ENCODE measurements at regions of chr2 and their contacts with region 1.

Region 1: GRCh38 chr2:207341804-207342203 is 176.1 kb upstream of the KLF7 start:
- DNase-seq: no peak
- ATAC-seq: peak; percentile 89
- H3K4me3 Mint-ChIP-seq: no peak overlapping the region
- H3K27ac Mint-ChIP-seq: no peak overlapping the region
- H3K4me1 Mint-ChIP-seq: peaks cover 38% of the 10 kb centered on the region
- H3K27me3 Mint-ChIP-seq: no peaks in the 10 kb centered on the region; the same call in 1 of the 2 replicates
- CTCF ChIP-seq: no peak

Region 2: GRCh38 chr2:206981739-206982340 is 360.0 kb before region 1 on chr2:
- CTCF ChIA-PET with region 1: interaction called, 10 read pairs
- POLR2A ChIA-PET with region 1: no interaction called
- DNase-seq: peak; percentile 72
- ATAC-seq: peak; percentile 84
- H3K4me3 Mint-ChIP-seq: no peak overlapping the region
- H3K27ac Mint-ChIP-seq: no peak overlapping the region
- H3K4me1 Mint-ChIP-seq: peaks cover 35% of the 10 kb centered on the region
- H3K27me3 Mint-ChIP-seq: no peaks in the 10 kb centered on the region
- CTCF ChIP-seq: peak; percentile 33; the same call in 1 of the 2 replicates

Region 3: DNA sequence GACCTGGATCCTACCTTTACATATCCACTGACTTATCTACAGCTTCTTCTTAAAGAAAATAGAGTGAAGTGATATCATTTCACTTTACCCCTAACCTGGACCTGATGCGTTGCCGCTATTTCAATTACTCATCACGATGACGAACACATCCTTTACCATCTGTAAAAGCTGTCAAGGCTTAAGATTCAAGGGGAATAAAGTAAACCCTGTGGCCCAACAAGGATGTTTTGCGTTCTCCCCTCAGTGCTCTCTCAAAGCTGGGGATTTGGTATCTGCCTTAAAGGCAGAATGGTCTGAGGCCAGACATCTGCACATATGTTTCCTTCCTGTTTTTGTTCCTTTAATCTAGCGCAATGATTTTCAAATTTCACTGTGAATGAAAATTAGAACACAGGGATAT is 75.9 kb before region 1 on chr2:
- CTCF ChIA-PET with region 1: no interaction called
- POLR2A ChIA-PET with region 1: no interaction called
- DNase-seq: no peak
- ATAC-seq: no peak
- H3K4me3 Mint-ChIP-seq: no peak overlapping the region
- H3K27ac Mint-ChIP-seq: no peak overlapping the region
- H3K4me1 Mint-ChIP-seq: peaks cover 8% of the 10 kb centered on the region; the same call in 1 of the 2 replicates
- H3K27me3 Mint-ChIP-seq: no peaks in the 10 kb centered on the region; the same call in 1 of the 2 replicates
- CTCF ChIP-seq: no peak

Region 4: GRCh38 chr2:207352978-207353671 is 11.3 kb after region 1 on chr2:
- CTCF ChIA-PET with region 1: no interaction called
- POLR2A ChIA-PET with region 1: no interaction called
- DNase-seq: no peak
- ATAC-seq: peak; percentile 69
- H3K4me3 Mint-ChIP-seq: no peak overlapping the region
- H3K27ac Mint-ChIP-seq: peak overlapping the region; percentile 17; the same call in 1 of the 2 replicates
- H3K4me1 Mint-ChIP-seq: peaks cover 9% of the 10 kb centered on the region
- H3K27me3 Mint-ChIP-seq: no peaks in the 10 kb centered on the region; the same call in 1 of the 2 replicates
- CTCF ChIP-seq: no peak

Region 5: DNA sequence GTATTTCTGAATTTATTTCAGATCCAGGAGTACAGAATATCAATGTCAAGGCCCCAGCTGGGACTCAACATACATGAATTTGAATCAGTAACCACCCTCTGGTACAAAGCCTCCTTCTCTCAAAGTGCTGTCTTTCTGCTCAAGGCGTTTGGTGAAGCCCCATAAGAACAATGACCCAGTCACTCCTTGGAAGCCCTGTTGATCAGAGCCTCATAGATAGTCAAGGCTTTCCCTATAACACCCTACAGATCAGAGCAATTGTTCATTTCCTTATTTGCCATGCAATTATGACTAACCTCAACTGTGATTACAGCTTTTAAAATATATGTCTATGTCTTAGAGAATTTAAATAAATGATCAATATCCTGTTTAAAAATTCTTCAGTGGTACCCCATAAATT is 28.8 kb after region 1 on chr2:
- CTCF ChIA-PET with region 1: no interaction called
- POLR2A ChIA-PET with region 1: no interaction called
- DNase-seq: no peak
- ATAC-seq: no peak
- H3K4me3 Mint-ChIP-seq: no peak overlapping the region
- H3K27ac Mint-ChIP-seq: no peak overlapping the region
- H3K4me1 Mint-ChIP-seq: peaks cover 14% of the 10 kb centered on the region
- H3K27me3 Mint-ChIP-seq: no peaks in the 10 kb centered on the region; the same call in 1 of the 2 replicates
- CTCF ChIP-seq: no peak